ENCODE measurements at regions of chr4 and their contacts with region 1.

Region 1: GRCh38 chr4:108954880-108955279 is 192.0 kb upstream of the ETNPPL start:
- DNase-seq: no peak
- ATAC-seq: no peak
- H3K4me3 ChIP-seq: no peak overlapping the region
- H3K27ac ChIP-seq: no peak overlapping the region
- H3K4me1 ChIP-seq: no peaks in the 10 kb centered on the region
- H3K27me3 ChIP-seq: no peaks in the 10 kb centered on the region
- CTCF ChIP-seq: no peak
- POLR2A ChIP-seq: no peak
- RAD21 ChIP-seq: no peak

Region 2: GRCh38 chr4:108978066-108978465 is 23.2 kb after region 1 on chr4:
- CTCF ChIA-PET with region 1: no interaction called
- POLR2A ChIA-PET with region 1: interaction called, 30 read pairs
- dilution Hi-C with region 1: no loop called
- in situ Hi-C with region 1: no loop called
- intact Hi-C with region 1: no loop called
- DNase-seq: no peak
- ATAC-seq: no peak
- H3K4me3 ChIP-seq: no peak overlapping the region
- H3K27ac ChIP-seq: no peak overlapping the region
- H3K4me1 ChIP-seq: no peaks in the 10 kb centered on the region
- H3K27me3 ChIP-seq: no peaks in the 10 kb centered on the region
- CTCF ChIP-seq: no peak
- POLR2A ChIP-seq: no peak
- RAD21 ChIP-seq: no peak

Measured in IMR-90 (cell line).